Mammary epithelial cell (primary cell): ENCODE measurements at regions of chr17 and their contacts with region 1.

Region 1: DNA sequence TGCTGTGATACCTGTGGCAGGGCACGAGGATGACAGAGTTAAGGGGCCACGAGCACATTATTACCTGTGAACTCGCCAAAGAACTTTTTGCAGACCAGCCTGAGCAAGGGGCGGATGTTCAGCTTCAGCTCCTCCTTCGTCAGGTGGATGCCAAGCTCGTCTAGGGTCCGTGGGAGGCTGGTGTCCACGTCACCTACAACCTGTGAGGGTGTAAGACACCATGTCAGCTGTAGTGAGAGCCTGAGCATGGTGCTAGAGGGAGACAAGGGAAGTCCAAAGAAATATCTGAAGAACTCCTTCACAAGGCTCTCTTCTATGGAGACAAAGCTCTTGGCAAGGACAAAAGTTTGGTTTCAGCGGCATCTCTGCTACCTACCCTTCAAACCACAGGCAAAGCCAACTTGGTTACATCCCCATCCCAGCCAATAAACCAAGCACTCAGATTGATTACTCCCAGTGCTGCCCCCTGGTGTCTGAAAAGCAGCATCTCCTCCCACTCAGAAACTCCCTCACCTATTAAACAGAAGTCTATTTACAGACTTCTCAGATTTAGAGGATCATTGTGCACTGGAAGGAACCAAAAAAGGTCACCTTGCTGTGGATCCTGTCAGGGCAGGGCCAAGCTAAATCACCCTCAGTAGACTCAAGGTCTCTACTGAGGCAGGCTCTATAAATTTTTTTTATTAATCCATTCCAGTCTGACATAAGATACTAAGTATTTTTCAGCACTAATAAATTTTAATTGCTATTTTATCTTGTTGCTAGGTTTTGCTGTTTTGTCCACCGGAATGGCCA is 17.4 kb downstream of the HIGD1B start:
- DNase-seq: peak; percentile 33
- H3K4me3 ChIP-seq: no peak overlapping the region
- H3K27ac ChIP-seq: no peak overlapping the region
- H3K4me1 ChIP-seq: no peaks in the 10 kb centered on the region
- H3K27me3 ChIP-seq: no peaks in the 10 kb centered on the region
- CTCF ChIP-seq: peak; percentile 85 to 90

Region 2: GRCh38 chr17:44829523-44830358 is 35.3 kb before region 1 on chr17 and contains the start of gene GJC1:
- CTCF ChIA-PET with region 1: no interaction called
- dilution Hi-C with region 1: no loop called
- in situ Hi-C with region 1: no loop called
- intact Hi-C with region 1: loop called (anchors 5 kb)
- DNase-seq: peak; percentile 45
- H3K4me3 ChIP-seq: peak within 1 kb of the TSS; percentile 80 to 98 (median 90)
- H3K27ac ChIP-seq: peak within 1 kb of the TSS; percentile 72
- H3K4me1 ChIP-seq: peaks cover 9% of the 10 kb centered on the region
- H3K27me3 ChIP-seq: no peaks in the 10 kb centered on the region
- CTCF ChIP-seq: no peak
- total RNA-seq, gene GJC1: 7.0 to 26.8 TPM